Posterior cingulate gyrus (tissue), 11 donors: ENCODE measurements at regions of chr14 and their contacts with region 1.

Region 1: DNA sequence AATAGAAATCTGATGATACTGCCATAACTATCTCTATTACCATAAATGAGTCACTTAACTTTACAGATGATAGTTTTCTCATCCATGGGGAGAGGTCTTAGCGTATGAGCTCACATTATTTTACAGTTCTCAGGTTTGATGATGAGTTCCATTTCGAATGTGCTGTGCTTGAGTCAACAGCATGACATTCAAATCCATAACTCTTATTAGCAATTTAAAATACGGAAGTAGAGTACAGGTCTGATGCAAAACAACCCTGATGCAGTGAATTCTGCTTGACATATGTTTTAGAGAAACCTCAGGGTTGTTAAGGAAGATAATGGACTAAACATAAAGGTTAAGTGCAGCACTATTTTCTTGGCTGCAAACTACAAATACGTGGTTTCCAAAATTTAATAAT is 30.0 kb downstream of the C14orf39 start:
- DNase-seq: no peak

Region 2: GRCh38 chr14:60014402-60014801 is 441.5 kb before region 1 on chr14:
- intact Hi-C with region 1: loop called (anchors 10 kb)
- DNase-seq: no peak

Region 3: GRCh38 chr14:60495946-60496345 is 40.1 kb after region 1 on chr14:
- intact Hi-C with region 1: no loop called
- DNase-seq: no peak

Region 4: DNA sequence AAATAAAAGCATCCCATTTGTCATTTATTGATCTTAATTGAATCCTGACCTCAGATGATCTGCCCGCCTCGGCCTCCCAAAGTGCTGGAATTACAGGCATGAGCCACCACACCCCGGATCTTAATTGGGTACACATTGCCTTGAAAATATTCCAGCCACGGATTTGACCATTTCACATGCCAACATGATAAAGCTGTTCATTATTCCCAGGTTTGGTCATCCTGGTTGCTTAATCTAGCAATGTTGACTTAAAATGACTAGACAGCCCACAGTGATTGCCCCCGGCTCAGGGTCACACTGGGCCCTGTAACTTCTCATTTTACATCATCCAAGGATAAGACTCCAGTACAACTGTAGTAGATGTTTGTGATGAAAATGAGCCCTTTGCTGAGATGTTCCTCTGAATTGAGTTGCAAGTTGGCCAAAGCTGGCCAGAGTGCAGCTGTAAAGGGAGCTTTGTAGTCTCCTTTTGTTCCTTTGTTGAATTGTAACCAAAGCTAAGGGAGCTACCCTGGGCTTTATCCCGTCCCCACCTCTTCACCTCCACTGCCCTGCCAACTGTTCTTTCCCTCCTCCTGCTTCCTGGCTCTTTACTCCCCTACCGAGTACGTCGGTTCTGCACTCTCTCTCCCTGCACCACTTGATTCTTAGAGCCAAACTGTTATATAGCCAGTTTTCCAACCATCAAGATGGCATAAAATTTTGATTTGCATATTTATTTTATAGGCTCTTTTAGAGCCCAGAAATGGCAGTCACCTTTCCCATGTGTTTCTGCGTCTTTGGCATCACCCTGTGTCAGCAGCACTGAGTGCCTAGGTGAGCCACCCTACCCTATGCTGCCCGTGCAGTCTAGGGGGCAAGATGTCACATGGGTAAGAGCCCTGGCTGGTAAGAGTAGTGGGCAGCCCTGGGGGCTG is 1098.1 kb after region 1 on chr14:
- intact Hi-C with region 1: no loop called
- DNase-seq: peak in 1 of 10 donors; percentile 22